ENCODE measurements at regions of chr11 and their contacts with region 1.

Region 1: GRCh38 chr11:1832211-1832919 is 2.4 kb upstream of the SYT8 start:
- DNase-seq: peak; percentile 76
- ATAC-seq: peak; percentile 77
- H3K4me3 ChIP-seq: no peak overlapping the region
- H3K4me3 Mint-ChIP-seq: no peak overlapping the region
- H3K27ac ChIP-seq: no peak overlapping the region
- H3K27ac Mint-ChIP-seq: no peak overlapping the region
- H3K4me1 ChIP-seq: peaks cover 4 to 9% of the 10 kb centered on the region in 2 donors
- H3K4me1 Mint-ChIP-seq: peaks cover 3% of the 10 kb centered on the region
- H3K27me3 ChIP-seq: peaks cover 0 to 28% (median 5%) of the 10 kb centered on the region in 4 experiments
- H3K27me3 Mint-ChIP-seq: peaks cover 8% of the 10 kb centered on the region
- CTCF ChIP-seq: peak; percentile 99

Region 2: DNA sequence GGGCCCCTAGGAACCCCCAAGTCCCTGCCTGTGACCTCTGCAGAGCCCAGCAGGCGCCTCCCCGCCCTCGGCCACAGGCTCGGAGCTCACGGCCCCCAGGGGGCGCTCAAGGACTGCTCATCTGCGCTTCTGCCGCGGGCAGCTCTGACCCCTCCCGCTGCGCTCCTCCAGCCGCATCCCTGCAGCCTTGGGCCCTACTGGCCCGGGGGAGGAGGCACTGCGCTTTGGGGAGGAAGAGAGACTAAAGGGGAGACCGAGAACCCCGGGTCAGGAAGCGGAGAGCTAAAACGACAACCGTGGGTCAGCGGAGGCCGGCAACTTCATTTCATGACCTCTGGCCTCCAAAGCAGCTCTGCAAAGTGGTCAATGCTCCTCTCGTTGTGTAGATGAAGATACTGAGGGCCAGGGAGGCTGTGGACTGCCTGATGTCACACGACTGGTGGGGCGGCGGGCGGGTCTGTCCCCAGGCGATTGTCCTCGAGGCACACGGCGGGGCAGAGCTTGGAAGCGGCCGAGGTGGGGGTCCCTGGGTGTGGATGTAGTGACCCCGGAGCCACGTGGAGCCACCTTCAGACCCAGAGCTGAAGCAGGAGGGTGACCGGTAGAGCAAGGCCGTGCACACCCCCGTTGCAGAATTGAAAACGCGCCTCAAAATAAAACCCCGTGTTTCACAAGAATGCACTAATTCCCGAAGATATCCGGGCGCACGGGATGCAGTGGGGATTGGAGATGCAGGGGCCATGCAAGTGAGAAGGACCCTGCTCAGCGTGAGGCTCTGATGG is 138.1 kb before region 1 on chr11:
- CTCF ChIA-PET with region 1: interaction called, 394 read pairs
- POLR2A ChIA-PET with region 1: interaction called, 12 read pairs
- intact Hi-C with region 1: no loop called
- DNase-seq: peak; percentile 85
- ATAC-seq: peak; percentile 84
- H3K4me3 ChIP-seq: peak overlapping the region in 1 of 5 experiments; percentile 19
- H3K4me3 Mint-ChIP-seq: no peak overlapping the region
- H3K27ac ChIP-seq: no peak overlapping the region
- H3K27ac Mint-ChIP-seq: no peak overlapping the region
- H3K4me1 ChIP-seq: peaks cover 8 to 14% of the 10 kb centered on the region in 2 donors
- H3K4me1 Mint-ChIP-seq: peaks cover 5% of the 10 kb centered on the region
- H3K27me3 ChIP-seq: peaks cover 0 to 43% (median 6%) of the 10 kb centered on the region in 4 experiments
- H3K27me3 Mint-ChIP-seq: peaks cover 44% of the 10 kb centered on the region
- CTCF ChIP-seq: peak; percentile 70

Region 3: DNA sequence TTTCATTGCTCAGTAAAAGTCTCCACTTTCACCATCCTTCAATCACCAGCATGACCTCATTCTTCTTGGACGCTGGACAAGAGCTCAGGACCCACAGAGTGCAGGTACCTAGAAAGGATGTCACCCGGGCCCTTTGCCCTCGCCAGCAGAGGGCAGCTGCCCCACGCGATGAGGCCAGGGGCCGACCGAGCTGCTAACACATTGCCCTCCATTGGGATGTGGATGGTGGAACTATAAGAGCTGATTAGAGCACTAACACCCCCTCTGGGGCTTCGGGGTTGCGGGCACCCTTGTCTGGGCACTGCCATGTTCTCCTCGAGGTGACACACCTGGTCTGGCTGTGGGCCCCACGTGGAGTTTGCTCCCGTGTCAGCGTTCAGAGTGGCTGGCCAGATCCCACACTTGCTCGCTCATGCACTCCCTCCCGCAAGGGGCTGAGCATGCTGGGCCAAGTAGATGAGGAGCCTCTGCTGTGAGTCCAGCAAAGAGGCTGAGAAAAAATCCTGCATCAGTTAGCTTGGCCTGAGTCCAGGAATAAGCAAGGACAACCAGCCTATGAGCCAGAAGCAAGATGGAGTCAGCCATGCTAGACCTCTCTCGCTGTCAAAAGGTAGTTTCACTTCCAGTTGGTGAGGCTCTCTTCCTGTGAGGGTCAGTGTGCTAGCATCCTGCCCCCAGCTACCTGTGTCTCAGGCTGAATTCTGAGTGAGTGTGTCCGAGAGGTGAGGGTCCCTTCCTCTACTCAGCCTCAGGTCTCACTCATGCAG is 125.5 kb before region 1 on chr11:
- CTCF ChIA-PET with region 1: interaction called, 18 read pairs
- POLR2A ChIA-PET with region 1: interaction called, 5 read pairs
- intact Hi-C with region 1: no loop called
- DNase-seq: no peak
- ATAC-seq: no peak
- H3K4me3 ChIP-seq: no peak overlapping the region
- H3K4me3 Mint-ChIP-seq: no peak overlapping the region
- H3K27ac ChIP-seq: no peak overlapping the region
- H3K27ac Mint-ChIP-seq: no peak overlapping the region
- H3K4me1 ChIP-seq: peaks cover 19 to 32% of the 10 kb centered on the region in 2 donors
- H3K4me1 Mint-ChIP-seq: peaks cover 31% of the 10 kb centered on the region
- H3K27me3 ChIP-seq: peaks cover 0 to 5% (median 0%) of the 10 kb centered on the region in 4 experiments
- H3K27me3 Mint-ChIP-seq: peaks cover 13% of the 10 kb centered on the region
- CTCF ChIP-seq: no peak

Region 4: DNA sequence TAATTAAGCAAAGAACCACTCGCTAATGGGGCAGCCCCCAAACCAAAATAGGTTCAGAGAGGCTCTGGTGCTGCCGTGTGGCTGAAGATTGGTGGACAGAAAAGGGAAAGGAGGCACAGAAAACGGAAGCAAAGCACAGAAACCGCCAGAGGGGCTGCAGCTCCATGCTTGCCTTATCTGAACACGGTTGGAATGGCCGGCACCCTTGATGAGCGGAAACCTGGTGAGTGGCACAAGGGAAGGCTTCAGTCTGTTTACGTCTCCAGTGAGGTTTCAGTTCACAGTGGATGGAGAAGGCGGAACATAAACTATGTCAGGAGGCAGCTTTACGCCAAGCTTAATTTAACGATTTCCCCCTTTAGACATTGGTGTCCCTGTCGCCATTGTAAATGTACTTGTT is 64.6 kb after region 1 on chr11:
- CTCF ChIA-PET with region 1: interaction called, 10 read pairs
- POLR2A ChIA-PET with region 1: no interaction called
- intact Hi-C with region 1: no loop called
- DNase-seq: peak; percentile 56
- ATAC-seq: peak; percentile 41
- H3K4me3 ChIP-seq: peak overlapping the region; percentile 15 to 44 (median 42)
- H3K4me3 Mint-ChIP-seq: peak overlapping the region; percentile 78
- H3K27ac ChIP-seq: no peak overlapping the region
- H3K27ac Mint-ChIP-seq: peak overlapping the region; percentile 15
- H3K4me1 ChIP-seq: peaks cover 10 to 14% of the 10 kb centered on the region in 2 donors
- H3K4me1 Mint-ChIP-seq: peaks cover 24% of the 10 kb centered on the region
- H3K27me3 ChIP-seq: peaks cover 0 to 5% (median 2%) of the 10 kb centered on the region in 4 experiments
- H3K27me3 Mint-ChIP-seq: peaks cover 6% of the 10 kb centered on the region
- CTCF ChIP-seq: no peak

Region 5: GRCh38 chr11:1946812-1947484 is 114.6 kb after region 1 on chr11 and contains the start of gene MRPL23:
- CTCF ChIA-PET with region 1: interaction called, 12 read pairs
- POLR2A ChIA-PET with region 1: no interaction called
- intact Hi-C with region 1: no loop called
- DNase-seq: no peak
- ATAC-seq: peak; percentile 93
- H3K4me3 ChIP-seq: no peak within 1 kb of the TSS
- H3K4me3 Mint-ChIP-seq: no peak within 1 kb of the TSS
- H3K27ac ChIP-seq: no peak within 1 kb of the TSS
- H3K27ac Mint-ChIP-seq: no peak within 1 kb of the TSS
- H3K4me1 ChIP-seq: no peaks in the 10 kb centered on the region
- H3K4me1 Mint-ChIP-seq: no peaks in the 10 kb centered on the region
- H3K27me3 ChIP-seq: no peaks in the 10 kb centered on the region
- H3K27me3 Mint-ChIP-seq: no peaks in the 10 kb centered on the region
- CTCF ChIP-seq: no peak
- total RNA-seq, gene MRPL23: 44.7 and 47.8 TPM in 2 replicates

Region 6: GRCh38 chr11:1988667-1989317 is 156.4 kb after region 1 on chr11:
- CTCF ChIA-PET with region 1: no interaction called
- POLR2A ChIA-PET with region 1: no interaction called
- intact Hi-C with region 1: no loop called
- DNase-seq: no peak
- ATAC-seq: no peak
- H3K4me3 ChIP-seq: no peak overlapping the region
- H3K4me3 Mint-ChIP-seq: no peak overlapping the region
- H3K27ac ChIP-seq: no peak overlapping the region
- H3K27ac Mint-ChIP-seq: no peak overlapping the region
- H3K4me1 ChIP-seq: no peaks in the 10 kb centered on the region
- H3K4me1 Mint-ChIP-seq: no peaks in the 10 kb centered on the region
- H3K27me3 ChIP-seq: no peaks in the 10 kb centered on the region
- H3K27me3 Mint-ChIP-seq: no peaks in the 10 kb centered on the region
- CTCF ChIP-seq: no peak

Measured in B cell (primary cell).